ENCODE measurements at regions of chr18 and their contacts with region 1.

Region 1: DNA sequence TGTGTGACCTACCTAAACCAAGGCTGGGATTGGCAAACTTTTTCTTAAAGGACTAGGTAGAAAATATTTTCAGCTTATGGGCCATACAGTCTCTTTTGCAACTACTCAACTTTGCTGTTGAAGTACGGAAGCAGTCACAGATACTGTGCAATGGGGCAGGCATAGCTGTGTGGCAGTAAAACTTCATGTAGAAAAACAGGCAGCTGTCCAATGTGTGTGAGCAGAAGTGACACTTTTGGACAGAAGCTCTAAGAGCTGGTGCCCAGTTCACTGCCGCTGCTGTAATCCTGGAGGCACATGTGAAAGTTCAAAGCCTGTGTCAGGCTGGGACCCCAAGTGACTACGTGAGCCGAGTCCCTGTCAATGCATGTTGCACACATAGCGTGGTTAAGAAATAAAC is 46.7 kb downstream of the MAPK4 start:
- DNase-seq: no peak
- ATAC-seq: peak; percentile 72 to 89

Region 2: DNA sequence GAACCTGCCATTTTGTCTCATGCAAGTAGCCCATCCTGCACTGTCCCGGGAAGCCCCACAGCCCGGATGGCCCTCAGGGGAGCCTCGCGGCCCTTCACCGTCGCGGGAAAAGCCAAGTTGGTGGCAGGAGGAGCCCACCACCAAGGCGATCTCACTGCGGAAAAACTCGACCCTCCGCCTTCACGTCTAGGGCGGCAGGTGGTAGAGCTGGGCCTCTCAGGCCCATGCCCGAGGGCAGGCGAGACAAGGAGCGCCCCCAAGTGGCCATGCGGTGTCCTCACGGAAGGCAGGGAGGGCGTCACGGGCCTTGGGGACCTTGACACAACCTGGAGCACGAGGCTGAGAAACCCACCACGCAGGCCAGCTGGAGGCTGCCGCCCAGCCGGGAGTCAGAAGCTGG is 266.5 kb before region 1 on chr18:
- intact Hi-C with region 1: no loop called
- DNase-seq: no peak
- ATAC-seq: no peak

Region 3: DNA sequence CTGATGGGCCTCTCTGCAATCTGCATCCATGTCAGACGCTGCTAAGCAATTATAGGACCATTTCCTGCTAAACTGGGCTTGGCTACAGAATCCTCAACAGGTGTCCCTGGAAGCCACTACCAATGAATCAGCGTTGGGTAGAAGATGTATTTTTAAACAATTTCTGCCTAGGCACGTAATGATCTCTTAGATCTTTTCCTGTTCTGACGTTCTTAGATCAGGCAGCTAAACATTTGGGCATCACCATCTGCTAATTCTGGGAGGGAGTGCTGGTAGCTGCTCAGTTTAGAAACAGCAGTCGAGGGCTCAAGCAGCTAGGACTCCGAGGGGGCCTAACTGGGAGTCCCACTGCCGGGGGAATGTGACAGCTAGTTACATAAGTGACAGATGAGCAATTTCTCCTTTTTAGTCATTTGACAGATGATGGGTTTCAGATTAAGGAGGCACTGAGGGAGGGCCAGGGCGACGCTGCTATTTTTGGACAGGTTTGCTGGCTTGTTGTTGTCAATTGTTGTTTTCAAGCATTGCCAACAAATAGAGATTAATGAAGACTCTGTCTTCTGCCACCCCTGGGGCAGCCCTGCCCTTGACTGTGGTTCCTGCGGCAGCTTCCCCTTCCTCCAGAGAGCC is 120.5 kb after region 1 on chr18:
- intact Hi-C with region 1: loop called in 1 of 2 experiments (anchors 5 kb)
- DNase-seq: no peak
- ATAC-seq: peak; percentile 38 to 51

Measured in left cardiac atrium (tissue), 4 donors.